Testis (tissue), 5 donors: ENCODE measurements at regions of chr9 and their contacts with region 1.

Region 1: DNA sequence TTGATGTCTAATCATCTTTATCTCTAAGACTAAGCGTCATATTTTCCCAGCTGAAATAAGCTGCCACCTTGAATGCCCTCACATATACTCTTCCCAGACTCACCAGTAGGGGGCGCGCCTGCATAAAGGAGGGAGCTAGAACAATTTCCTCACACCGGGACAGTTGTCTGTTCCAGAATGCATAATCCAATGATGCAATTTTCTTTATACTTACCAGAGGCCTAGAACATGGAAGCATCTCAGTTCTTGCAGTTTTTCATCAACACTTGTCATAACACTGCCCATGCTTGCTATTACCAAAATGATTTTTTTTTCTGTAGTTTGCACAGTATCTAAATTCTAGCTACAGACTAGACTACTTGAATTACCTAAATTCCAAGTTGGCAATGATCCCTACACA is 203.9 kb downstream of the FRMD3 start:
- DNase-seq: peak; percentile 88
- H3K4me3 ChIP-seq: no peak overlapping the region
- H3K27ac ChIP-seq: no peak overlapping the region
- H3K4me1 ChIP-seq: no peaks in the 10 kb centered on the region
- H3K27me3 ChIP-seq: no peaks in the 10 kb centered on the region
- CTCF ChIP-seq: peak; percentile 95 to 98 (median 95)
- POLR2A ChIP-seq: no peak

Region 2: DNA sequence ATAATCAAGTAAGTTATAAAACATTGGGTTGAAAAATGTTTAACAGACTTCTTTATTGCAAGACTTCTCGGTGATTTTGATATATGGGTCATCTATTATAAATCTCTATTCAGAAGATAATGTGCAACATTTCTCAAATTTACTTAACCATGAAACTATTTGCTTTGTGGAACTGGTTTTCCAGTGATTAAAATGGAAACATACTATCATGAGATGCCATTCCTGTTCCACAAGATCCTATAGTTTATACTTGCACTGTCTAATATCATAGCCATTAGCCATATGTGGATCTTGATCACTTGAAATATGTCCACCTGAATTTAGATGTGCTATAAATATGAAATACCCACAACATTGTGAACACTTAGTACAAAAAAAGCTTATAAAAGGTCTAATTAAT is 240.4 kb before region 1 on chr9:
- intact Hi-C with region 1: no loop called
- DNase-seq: no peak
- H3K4me3 ChIP-seq: no peak overlapping the region
- H3K27ac ChIP-seq: no peak overlapping the region
- H3K4me1 ChIP-seq: no peaks in the 10 kb centered on the region
- H3K27me3 ChIP-seq: no peaks in the 10 kb centered on the region
- CTCF ChIP-seq: no peak
- POLR2A ChIP-seq: no peak

Region 3: DNA sequence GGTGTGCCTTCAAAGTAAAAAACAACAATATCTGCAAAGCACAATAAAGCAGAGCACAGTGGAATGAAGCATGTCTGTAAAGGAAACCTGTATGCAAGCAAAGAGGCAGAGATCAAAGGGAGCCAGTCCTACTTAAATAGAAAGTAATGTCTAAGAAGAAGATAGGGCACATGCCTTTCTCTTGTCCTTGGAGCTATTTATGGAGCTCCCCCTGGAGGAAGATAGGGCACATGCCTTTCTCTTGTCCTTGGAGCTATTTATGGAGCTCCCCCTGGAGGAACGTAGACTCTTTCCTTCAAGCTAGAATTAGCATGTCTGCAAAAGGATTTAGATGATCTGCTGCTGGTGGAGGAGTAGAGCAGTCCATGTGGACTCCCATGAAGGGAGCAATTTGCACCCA is 103.3 kb before region 1 on chr9:
- intact Hi-C with region 1: no loop called
- DNase-seq: no peak
- H3K4me3 ChIP-seq: no peak overlapping the region
- H3K27ac ChIP-seq: no peak overlapping the region
- H3K4me1 ChIP-seq: no peaks in the 10 kb centered on the region
- H3K27me3 ChIP-seq: no peaks in the 10 kb centered on the region
- CTCF ChIP-seq: no peak
- POLR2A ChIP-seq: no peak

Region 4: DNA sequence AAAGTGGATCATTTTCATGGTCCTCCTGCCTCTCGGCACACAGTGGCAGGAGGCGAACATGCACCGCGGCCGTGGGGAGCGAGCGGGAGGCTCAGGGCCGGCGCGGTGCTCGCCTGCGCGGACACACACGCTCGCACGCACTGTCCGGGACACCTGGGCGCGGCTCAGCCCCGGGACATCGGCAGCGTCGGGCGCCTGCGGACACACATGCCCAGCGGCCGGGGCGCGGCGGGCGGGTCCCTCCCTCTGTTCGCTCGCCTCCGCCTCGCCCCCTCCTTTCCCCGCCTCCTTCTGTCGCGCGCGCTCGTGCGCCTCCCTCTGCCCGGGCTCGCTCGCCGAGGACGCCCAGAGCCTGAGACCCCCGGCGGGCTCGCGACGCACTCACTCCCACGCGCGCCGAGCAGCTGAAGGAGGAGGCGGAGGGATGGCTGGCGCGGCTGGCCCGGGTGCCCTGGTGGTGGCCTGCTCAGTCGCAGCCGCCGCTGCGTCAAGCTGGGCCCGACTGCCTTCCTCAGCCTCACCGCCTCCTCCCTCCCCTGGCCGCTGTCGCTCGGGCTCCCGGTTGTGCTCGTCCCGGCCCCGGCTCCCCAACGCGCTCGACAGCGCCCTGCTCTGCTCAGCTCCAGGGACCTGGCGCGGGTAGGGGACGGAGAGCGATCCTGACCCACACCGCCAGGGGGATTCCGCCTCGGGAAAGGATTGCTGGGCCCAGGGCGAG is 204.0 kb after region 1 on chr9 and contains the start of gene FRMD3:
- intact Hi-C with region 1: loop called (anchors 10 kb)
- DNase-seq: peak; percentile 81
- H3K4me3 ChIP-seq: peak within 1 kb of the TSS; percentile 60 to 63
- H3K27ac ChIP-seq: peak within 1 kb of the TSS; percentile 45 to 52
- H3K4me1 ChIP-seq: peaks cover 8% of the 10 kb centered on the region
- H3K27me3 ChIP-seq: no peaks in the 10 kb centered on the region
- CTCF ChIP-seq: peak in 2 of 3 experiments; percentile 54 to 61
- POLR2A ChIP-seq: no peak
- total RNA-seq, gene FRMD3: 5.5 to 16.2 TPM